ENCODE measurements at regions of chr16 and their contacts with region 1.

Region 1: GRCh38 chr16:56317998-56318826 is 107.1 kb downstream of the AMFR start:
- DNase-seq: peak; percentile 42 to 82 (median 67)
- ATAC-seq: peak; percentile 95
- H3K4me3 ChIP-seq: peak overlapping the region; percentile 47
- H3K4me3 Mint-ChIP-seq: peak overlapping the region; percentile 29 to 72 (median 56)
- H3K27ac ChIP-seq: no peak overlapping the region
- H3K27ac Mint-ChIP-seq: peak overlapping the region in 1 of 9 donors; percentile 66
- H3K4me1 ChIP-seq: peaks cover 0 to 7% of the 10 kb centered on the region in 2 donors
- H3K4me1 Mint-ChIP-seq: peaks cover 0 to 14% (median 0%) of the 10 kb centered on the region in 7 donors
- H3K27me3 ChIP-seq: no peaks in the 10 kb centered on the region
- H3K27me3 Mint-ChIP-seq: peaks cover 0 to 9% (median 4%) of the 10 kb centered on the region in 5 donors

Region 2: GRCh38 chr16:55842369-55843104 is 475.7 kb before region 1 on chr16:
- CTCF ChIA-PET with region 1: no interaction called
- POLR2A ChIA-PET with region 1: no interaction called
- intact Hi-C with region 1: loop called in 1 of 2 experiments (anchors 5 kb)
- DNase-seq: peak in 5 of 9 donors; percentile 3 to 17 (median 9)
- ATAC-seq: peak; percentile 62
- H3K4me3 ChIP-seq: no peak overlapping the region
- H3K4me3 Mint-ChIP-seq: no peak overlapping the region
- H3K27ac ChIP-seq: no peak overlapping the region
- H3K27ac Mint-ChIP-seq: no peak overlapping the region
- H3K4me1 ChIP-seq: no peaks in the 10 kb centered on the region
- H3K4me1 Mint-ChIP-seq: peaks cover 0 to 1% (median 0%) of the 10 kb centered on the region in 7 donors
- H3K27me3 ChIP-seq: no peaks in the 10 kb centered on the region
- H3K27me3 Mint-ChIP-seq: peaks cover 11 to 46% (median 25%) of the 10 kb centered on the region in 5 donors

Region 3: GRCh38 chr16:55944377-55944802 is 373.8 kb before region 1 on chr16:
- CTCF ChIA-PET with region 1: interaction called, 22 read pairs
- POLR2A ChIA-PET with region 1: no interaction called
- intact Hi-C with region 1: loop called in 1 of 2 experiments (anchors 1 kb)
- DNase-seq: peak in 6 of 9 donors; percentile 11 to 49 (median 24)
- ATAC-seq: peak; percentile 66
- H3K4me3 ChIP-seq: no peak overlapping the region
- H3K4me3 Mint-ChIP-seq: no peak overlapping the region
- H3K27ac ChIP-seq: no peak overlapping the region
- H3K27ac Mint-ChIP-seq: no peak overlapping the region
- H3K4me1 ChIP-seq: no peaks in the 10 kb centered on the region
- H3K4me1 Mint-ChIP-seq: peaks cover 0 to 3% (median 0%) of the 10 kb centered on the region in 7 donors
- H3K27me3 ChIP-seq: no peaks in the 10 kb centered on the region
- H3K27me3 Mint-ChIP-seq: peaks cover 42 to 53% (median 47%) of the 10 kb centered on the region in 5 donors

Region 4: GRCh38 chr16:56041686-56042085 is 276.5 kb before region 1 on chr16:
- CTCF ChIA-PET with region 1: no interaction called
- POLR2A ChIA-PET with region 1: no interaction called
- intact Hi-C with region 1: loop called in 1 of 2 experiments (anchors 1 kb)
- DNase-seq: peak in 1 of 9 donors; percentile 3
- ATAC-seq: peak; percentile 61
- H3K4me3 ChIP-seq: no peak overlapping the region
- H3K4me3 Mint-ChIP-seq: no peak overlapping the region
- H3K27ac ChIP-seq: no peak overlapping the region
- H3K27ac Mint-ChIP-seq: no peak overlapping the region
- H3K4me1 ChIP-seq: no peaks in the 10 kb centered on the region
- H3K4me1 Mint-ChIP-seq: no peaks in the 10 kb centered on the region
- H3K27me3 ChIP-seq: no peaks in the 10 kb centered on the region
- H3K27me3 Mint-ChIP-seq: peaks cover 13 to 45% (median 28%) of the 10 kb centered on the region in 5 donors